Dendritic cell treated with granulocyte-macrophage colony-stimulating factor and Interleukin-4, amounts not matched to agents 40 ng/mL and 50 ng/mL, for 4 days (primary cell): ENCODE measurements at regions of chr2 and their contacts with region 1.

Region 1: GRCh38 chr2:15560988-15561573 is at the start of gene NBAS:
- H3K4me3 Mint-ChIP-seq: peak within 1 kb of the TSS; percentile 93
- H3K27ac Mint-ChIP-seq: peak within 1 kb of the TSS; percentile 88
- H3K4me1 Mint-ChIP-seq: peaks cover 32% of the 10 kb centered on the region
- H3K27me3 Mint-ChIP-seq: peaks cover 3% of the 10 kb centered on the region

Region 2: GRCh38 chr2:15506231-15506819 is 54.8 kb before region 1 on chr2:
- intact Hi-C with region 1: no loop called
- H3K4me3 Mint-ChIP-seq: no peak overlapping the region
- H3K27ac Mint-ChIP-seq: no peak overlapping the region
- H3K4me1 Mint-ChIP-seq: no peaks in the 10 kb centered on the region
- H3K27me3 Mint-ChIP-seq: no peaks in the 10 kb centered on the region

Region 3: GRCh38 chr2:15591692-15592463 is 30.8 kb after region 1 on chr2 and contains the start of gene DDX1:
- intact Hi-C with region 1: loop called (anchors 1 kb)
- H3K4me3 Mint-ChIP-seq: peak within 1 kb of the TSS; percentile 98
- H3K27ac Mint-ChIP-seq: peak within 1 kb of the TSS; percentile 90
- H3K4me1 Mint-ChIP-seq: peaks cover 20% of the 10 kb centered on the region
- H3K27me3 Mint-ChIP-seq: no peaks in the 10 kb centered on the region